AG04450 (cell line): ENCODE measurements at regions of chr6 and their contacts with region 1.

Region 1: DNA sequence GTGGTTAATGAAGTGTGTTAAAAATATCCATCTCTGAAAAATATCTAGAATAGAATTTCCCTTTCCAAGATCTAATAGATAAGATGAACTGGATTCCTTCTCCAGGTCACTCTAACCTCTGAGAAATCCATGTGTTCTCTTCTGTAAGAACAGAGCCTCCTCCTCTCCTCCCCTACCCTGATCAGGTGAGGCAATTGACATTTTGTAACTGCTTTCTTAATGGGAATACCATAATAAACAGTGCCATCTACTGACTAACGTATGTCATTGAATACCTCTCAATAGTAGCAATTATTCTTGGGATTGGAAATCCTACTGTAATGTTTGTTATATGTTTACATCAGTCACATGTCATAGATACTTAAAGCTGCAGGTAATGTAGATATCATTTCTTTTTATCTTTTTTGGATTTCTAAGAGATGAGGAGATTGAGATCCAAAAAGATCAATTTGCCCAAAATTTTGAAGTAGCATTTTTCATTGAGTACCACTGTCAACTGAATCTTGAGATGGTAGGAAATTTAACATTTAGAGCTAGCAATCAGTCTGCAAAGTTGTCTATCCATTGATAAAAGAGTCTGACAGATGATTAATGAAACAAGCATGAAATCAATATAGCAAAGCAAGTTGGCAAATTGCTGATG is 365.8 kb upstream of the HSF2 start:
- DNase-seq: peak; percentile 32
- H3K4me3 ChIP-seq: no peak overlapping the region
- H3K27ac ChIP-seq: no peak overlapping the region
- H3K27me3 ChIP-seq: no peaks in the 10 kb centered on the region
- CTCF ChIP-seq: peak; percentile 69

Region 2: GRCh38 chr6:121436960-121437850 is 596.5 kb before region 1 on chr6:
- CTCF ChIA-PET with region 1: interaction called, 64 read pairs
- POLR2A ChIA-PET with region 1: no interaction called
- DNase-seq: peak; percentile 11
- H3K4me3 ChIP-seq: peak overlapping the region; percentile 87
- H3K27ac ChIP-seq: peak overlapping the region; percentile 83
- H3K27me3 ChIP-seq: no peaks in the 10 kb centered on the region
- CTCF ChIP-seq: no peak

Region 3: DNA sequence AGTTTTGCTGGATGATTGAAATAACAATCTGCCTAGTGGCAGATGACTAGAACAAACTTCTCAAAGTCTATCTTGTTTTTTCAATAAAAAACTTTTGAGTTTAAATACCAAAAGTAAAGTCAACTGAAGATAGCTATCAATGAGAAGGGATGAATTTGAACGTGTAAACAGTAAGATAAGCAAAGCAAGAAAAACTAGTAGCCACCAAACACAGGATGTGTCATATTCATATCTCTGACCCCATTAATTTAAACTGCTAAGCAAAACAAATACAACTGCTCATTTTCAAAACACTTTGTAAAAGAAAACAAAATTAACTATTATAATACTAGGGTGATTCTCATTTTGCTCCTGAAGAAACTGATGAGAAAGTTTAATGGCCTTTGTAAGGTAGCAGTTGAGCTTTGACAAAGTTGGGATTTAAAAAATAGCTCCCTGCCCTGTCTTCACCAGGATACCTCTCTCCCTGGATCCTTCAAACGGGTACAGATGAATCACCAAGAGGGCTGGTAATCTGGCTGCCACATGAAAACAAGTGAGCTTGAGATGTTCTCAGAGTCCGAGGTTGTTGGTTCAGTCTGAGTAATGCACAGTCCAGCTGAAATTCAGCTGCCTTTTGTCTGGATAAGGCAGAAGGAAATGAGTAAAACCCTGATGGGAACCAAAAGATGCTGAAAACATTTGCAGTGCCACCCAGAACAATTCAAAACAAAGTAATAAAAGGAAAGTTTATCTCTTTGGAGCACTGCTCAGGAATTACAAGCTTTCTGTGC is 511.6 kb before region 1 on chr6:
- CTCF ChIA-PET with region 1: interaction called, 12 read pairs
- POLR2A ChIA-PET with region 1: no interaction called
- DNase-seq: peak; percentile 86
- H3K4me3 ChIP-seq: no peak overlapping the region
- H3K27ac ChIP-seq: peak overlapping the region; percentile 86
- H3K27me3 ChIP-seq: no peaks in the 10 kb centered on the region
- CTCF ChIP-seq: no peak

Region 4: DNA sequence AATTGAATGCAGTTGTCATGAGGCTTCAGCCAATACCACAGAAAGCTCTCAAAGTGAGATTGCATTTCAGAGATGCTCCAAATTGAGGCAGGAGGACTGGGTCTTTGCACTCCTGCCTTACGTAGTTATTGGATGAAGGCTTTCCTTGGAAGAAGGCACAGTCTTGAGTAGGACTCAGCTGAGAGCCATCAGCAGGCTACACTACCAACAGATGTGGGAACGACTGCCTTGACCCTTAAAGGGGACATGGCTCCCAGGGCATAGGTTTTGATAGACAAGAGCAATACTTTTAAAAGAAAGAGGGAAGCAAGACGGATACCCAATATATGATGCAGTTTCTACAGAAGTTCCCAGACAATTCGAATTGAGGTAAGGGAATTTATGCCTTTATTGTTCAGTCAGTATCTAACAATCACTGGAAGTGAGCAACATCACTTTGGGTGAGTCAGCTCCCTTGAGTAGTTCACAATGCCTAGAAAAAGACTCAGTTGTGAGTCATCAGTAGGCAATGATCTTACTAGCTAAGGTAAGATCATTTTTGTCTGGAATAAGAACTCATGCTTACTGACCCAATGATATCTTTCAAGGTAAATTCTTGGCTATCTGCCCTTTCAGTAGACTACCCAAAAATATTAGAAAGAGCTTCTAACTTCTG is 207.4 kb before region 1 on chr6:
- CTCF ChIA-PET with region 1: no interaction called
- POLR2A ChIA-PET with region 1: no interaction called
- DNase-seq: peak; percentile 61
- H3K4me3 ChIP-seq: no peak overlapping the region
- H3K27ac ChIP-seq: no peak overlapping the region
- H3K27me3 ChIP-seq: no peaks in the 10 kb centered on the region
- CTCF ChIP-seq: no peak

Region 5: DNA sequence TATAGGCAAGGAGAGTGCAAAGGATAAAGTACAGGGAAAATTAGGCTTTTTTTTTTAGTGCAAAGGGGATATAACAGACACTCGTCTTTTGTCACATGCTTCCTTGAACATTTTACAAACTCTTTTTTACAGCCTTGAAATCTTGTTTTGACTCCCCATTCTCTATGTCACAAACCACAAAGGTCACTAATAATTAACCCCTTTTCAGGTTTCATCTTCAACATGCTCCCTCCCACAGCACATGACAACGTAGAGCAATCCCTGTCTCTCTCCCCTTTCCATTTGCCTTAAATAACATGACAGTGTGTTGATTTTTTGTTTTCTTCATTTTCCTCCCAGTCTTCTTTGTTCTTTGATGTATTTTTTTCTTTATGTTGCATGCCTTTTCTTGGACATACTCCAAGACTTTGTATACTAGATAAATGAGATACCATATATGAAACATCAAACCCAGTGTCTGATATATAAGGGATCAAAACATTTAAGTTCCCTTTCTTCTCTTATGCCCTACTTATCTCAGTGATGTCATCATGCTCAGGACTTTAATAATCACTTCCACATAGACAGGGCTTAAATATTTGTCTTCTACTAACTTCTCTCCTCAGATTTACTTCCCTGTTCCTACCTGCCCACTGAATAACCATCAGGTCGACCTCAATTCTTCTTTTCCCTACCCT is 12.9 kb before region 1 on chr6:
- CTCF ChIA-PET with region 1: interaction called, 11 read pairs
- POLR2A ChIA-PET with region 1: no interaction called
- DNase-seq: no peak
- H3K4me3 ChIP-seq: no peak overlapping the region
- H3K27ac ChIP-seq: no peak overlapping the region
- H3K27me3 ChIP-seq: no peaks in the 10 kb centered on the region
- CTCF ChIP-seq: no peak